Dendritic cell treated with granulocyte-macrophage colony-stimulating factor and Interleukin-4, amounts not matched to agents 40 ng/mL and 50 ng/mL, for 4 days (primary cell): ENCODE measurements at regions of chr16 and their contacts with region 1.

Region 1: GRCh38 chr16:2752035-2752849 is at the start of gene SRRM2:
- H3K4me3 Mint-ChIP-seq: peak within 1 kb of the TSS; percentile 82
- H3K27ac Mint-ChIP-seq: peak within 1 kb of the TSS; percentile 99
- H3K4me1 Mint-ChIP-seq: peaks cover 50% of the 10 kb centered on the region
- H3K27me3 Mint-ChIP-seq: no peaks in the 10 kb centered on the region

Region 2: GRCh38 chr16:2720719-2721633 is 31.3 kb before region 1 on chr16:
- intact Hi-C with region 1: loop called (anchors 2 kb)
- H3K4me3 Mint-ChIP-seq: peak overlapping the region; percentile 79
- H3K27ac Mint-ChIP-seq: peak overlapping the region; percentile 83
- H3K4me1 Mint-ChIP-seq: peaks cover 16% of the 10 kb centered on the region
- H3K27me3 Mint-ChIP-seq: peaks cover 27% of the 10 kb centered on the region

Region 3: DNA sequence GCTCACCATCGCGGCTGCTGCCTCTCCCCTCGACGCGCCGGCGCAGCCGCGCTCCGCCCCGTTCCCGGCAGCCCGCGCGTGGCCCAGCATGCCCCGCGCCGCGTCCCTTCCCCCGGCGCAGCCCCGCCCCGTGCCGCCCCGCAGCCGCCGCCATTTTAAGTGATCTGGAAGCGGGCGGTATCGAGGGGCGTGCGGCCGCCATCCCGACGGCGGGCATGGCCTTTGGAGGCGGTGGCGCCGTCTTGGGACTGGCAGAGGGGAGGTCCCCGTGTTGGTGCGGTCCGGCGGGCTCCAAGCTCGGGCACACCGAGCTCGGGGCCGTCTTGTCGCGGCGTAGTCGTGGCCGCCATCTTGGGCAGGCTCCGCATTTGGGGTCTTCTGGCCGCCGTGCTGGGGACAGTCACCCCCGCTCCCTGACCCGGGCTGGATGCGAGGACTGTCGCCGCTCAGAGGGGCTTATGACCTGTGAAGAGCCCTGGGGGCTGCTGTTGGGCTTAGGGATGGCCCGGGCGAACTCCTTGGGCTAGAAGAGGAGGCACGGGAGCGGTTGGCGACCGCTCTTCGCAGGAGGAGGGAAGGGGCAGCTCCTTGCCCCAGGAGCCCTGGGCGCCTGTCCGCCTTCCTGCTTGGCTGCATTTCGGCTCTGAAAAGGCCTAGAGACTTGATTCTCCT is 25.1 kb after region 1 on chr16 and contains the start of gene ELOB:
- intact Hi-C with region 1: loop called (anchors 2 kb)
- H3K4me3 Mint-ChIP-seq: peak within 1 kb of the TSS; percentile 90
- H3K27ac Mint-ChIP-seq: peak within 1 kb of the TSS; percentile 99
- H3K4me1 Mint-ChIP-seq: peaks cover 58% of the 10 kb centered on the region
- H3K27me3 Mint-ChIP-seq: peaks cover 2% of the 10 kb centered on the region

Region 4: DNA sequence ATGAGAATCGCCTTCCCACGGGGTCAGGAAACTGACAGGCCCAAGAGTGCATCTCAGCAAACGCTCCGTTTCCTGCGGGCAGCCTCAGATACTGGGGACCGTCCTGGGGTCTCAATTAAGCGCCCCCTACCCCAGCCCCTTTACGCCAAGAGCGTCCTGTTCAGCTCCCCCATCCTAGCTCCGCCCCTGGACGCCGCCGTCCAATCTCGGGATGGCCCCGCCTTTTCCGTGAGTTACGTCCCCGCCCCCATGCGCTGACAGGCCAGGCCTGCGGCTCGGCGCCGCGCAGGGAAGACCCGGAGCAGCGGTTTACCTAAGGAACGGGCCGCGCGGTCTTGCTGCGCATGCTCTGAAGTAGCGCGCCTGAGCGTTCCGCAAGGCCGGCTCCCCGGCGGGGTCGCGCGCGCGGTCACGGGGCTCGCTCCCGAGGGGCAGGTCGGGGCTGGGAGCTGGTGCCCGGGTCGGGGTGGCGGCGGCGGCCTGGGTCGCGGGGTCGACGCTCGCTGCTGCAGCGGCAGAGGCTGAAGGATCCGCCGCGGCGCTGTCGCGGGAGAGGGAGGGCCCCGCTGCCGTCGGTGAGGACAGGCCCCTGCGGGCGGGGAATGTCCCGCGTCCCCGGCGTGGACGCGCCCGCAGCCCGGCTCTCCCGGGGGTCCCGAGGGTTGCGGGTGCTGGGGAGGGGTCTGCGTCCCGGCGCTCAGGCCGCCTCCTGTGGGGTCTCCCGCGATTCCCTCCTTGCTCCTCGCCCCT is 159.5 kb after region 1 on chr16 and contains the start of gene FLYWCH1:
- intact Hi-C with region 1: loop called (anchors 10 kb)
- H3K4me3 Mint-ChIP-seq: peak within 1 kb of the TSS; percentile 92
- H3K27ac Mint-ChIP-seq: peak within 1 kb of the TSS; percentile 86
- H3K4me1 Mint-ChIP-seq: peaks cover 40% of the 10 kb centered on the region
- H3K27me3 Mint-ChIP-seq: peaks cover 4% of the 10 kb centered on the region